Panc1 (cell line): ENCODE measurements at regions of chr5 and their contacts with region 1.

Region 1: GRCh38 chr5:17069995-17070511 is 134.0 kb upstream of the MYO10 start:
- DNase-seq: no peak
- ATAC-seq: no peak
- H3K4me3 ChIP-seq: no peak overlapping the region
- H3K27ac ChIP-seq: no peak overlapping the region
- H3K4me1 ChIP-seq: no peaks in the 10 kb centered on the region
- H3K27me3 ChIP-seq: no peaks in the 10 kb centered on the region
- CTCF ChIP-seq: no peak

Region 2: GRCh38 chr5:17177501-17178372 is 107.7 kb after region 1 on chr5:
- CTCF ChIA-PET with region 1: no interaction called
- POLR2A ChIA-PET with region 1: interaction called, 14 read pairs
- in situ Hi-C with region 1: no loop called
- intact Hi-C with region 1: no loop called
- DNase-seq: no peak
- ATAC-seq: no peak
- H3K4me3 ChIP-seq: no peak overlapping the region
- H3K27ac ChIP-seq: no peak overlapping the region
- H3K4me1 ChIP-seq: no peaks in the 10 kb centered on the region
- H3K27me3 ChIP-seq: no peaks in the 10 kb centered on the region
- CTCF ChIP-seq: no peak

Region 3: GRCh38 chr5:17455942-17456341 is 385.9 kb after region 1 on chr5:
- CTCF ChIA-PET with region 1: no interaction called
- POLR2A ChIA-PET with region 1: interaction called, 13 read pairs
- in situ Hi-C with region 1: no loop called
- intact Hi-C with region 1: no loop called
- DNase-seq: no peak
- ATAC-seq: no peak
- H3K4me3 ChIP-seq: no peak overlapping the region
- H3K27ac ChIP-seq: no peak overlapping the region
- H3K4me1 ChIP-seq: no peaks in the 10 kb centered on the region
- H3K27me3 ChIP-seq: no peaks in the 10 kb centered on the region
- CTCF ChIP-seq: no peak